ENCODE measurements at regions of chr20 and their contacts with region 1.

Region 1: DNA sequence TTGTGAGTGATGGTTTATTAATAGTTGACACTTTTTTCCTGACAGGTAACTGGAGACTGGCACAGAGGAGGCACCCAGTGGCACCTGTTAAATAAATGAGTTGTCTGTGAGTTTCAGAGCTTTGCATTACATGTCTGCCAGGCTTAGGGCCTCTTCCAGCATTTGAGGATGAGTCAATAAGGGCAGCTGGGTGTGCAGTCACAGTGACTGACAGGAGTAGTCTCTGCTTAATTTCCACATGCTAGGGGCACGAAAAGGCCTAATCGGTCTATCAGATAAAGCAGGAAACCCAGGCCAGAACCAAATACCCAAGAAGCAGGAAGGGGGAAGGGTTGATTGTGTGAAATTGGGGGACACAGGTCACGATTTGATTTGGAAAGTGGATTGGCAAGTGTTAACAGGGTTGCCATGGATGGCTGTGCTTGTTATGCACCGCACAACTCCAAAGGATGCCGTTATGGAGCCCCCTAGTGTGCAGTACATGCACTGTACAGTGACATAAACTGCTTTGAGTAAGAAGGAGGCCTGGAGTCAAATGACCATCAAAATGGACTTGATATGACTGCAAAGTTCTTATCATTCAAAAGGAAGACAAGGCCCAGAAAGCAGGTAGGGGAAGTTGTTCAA is 111.9 kb upstream of the GGTLC1 start:
- DNase-seq: peak; percentile 69
- H3K4me3 Mint-ChIP-seq: no peak overlapping the region
- H3K27ac Mint-ChIP-seq: no peak overlapping the region
- H3K4me1 Mint-ChIP-seq: peaks cover 20% of the 10 kb centered on the region
- H3K27me3 Mint-ChIP-seq: peaks cover 11% of the 10 kb centered on the region

Region 2: GRCh38 chr20:23937303-23938117 is 163.0 kb before region 1 on chr20:
- CTCF ChIA-PET with region 1: interaction called, 23 read pairs
- POLR2A ChIA-PET with region 1: no interaction called
- intact Hi-C with region 1: loop called (anchors 1 kb)
- DNase-seq: peak; percentile 70
- H3K4me3 Mint-ChIP-seq: no peak overlapping the region
- H3K27ac Mint-ChIP-seq: no peak overlapping the region
- H3K4me1 Mint-ChIP-seq: no peaks in the 10 kb centered on the region
- H3K27me3 Mint-ChIP-seq: no peaks in the 10 kb centered on the region

Region 3: GRCh38 chr20:24027229-24027628 is 73.3 kb before region 1 on chr20:
- CTCF ChIA-PET with region 1: interaction called, 4 read pairs
- POLR2A ChIA-PET with region 1: no interaction called
- intact Hi-C with region 1: loop called (anchors 2 kb)
- DNase-seq: peak; percentile 88
- H3K4me3 Mint-ChIP-seq: peak overlapping the region; percentile 48
- H3K27ac Mint-ChIP-seq: peak overlapping the region; percentile 88
- H3K4me1 Mint-ChIP-seq: peaks cover 32% of the 10 kb centered on the region
- H3K27me3 Mint-ChIP-seq: no peaks in the 10 kb centered on the region

Region 4: DNA sequence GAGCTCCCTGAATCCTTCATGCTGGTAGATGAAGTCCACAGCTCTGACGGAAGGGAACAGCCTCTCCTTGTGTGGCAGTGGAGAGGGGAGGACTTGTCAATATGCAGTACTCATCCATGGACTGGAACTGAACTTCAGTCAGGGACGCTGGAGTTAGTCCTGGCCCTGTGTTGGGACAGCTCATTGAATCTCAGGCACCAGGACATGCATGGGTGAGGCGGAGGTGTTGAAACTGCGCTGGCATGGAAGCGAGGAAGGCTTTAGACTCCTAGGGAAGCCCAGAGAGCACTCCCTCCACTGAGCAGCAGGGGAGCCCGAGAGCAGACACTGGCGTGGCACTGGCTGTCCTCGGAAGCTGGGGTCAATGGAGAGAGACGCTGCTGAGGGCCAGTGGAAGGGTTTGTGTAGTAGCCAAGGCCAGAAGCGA is 49.4 kb after region 1 on chr20:
- CTCF ChIA-PET with region 1: no interaction called
- POLR2A ChIA-PET with region 1: no interaction called
- intact Hi-C with region 1: no loop called
- DNase-seq: no peak
- H3K4me3 Mint-ChIP-seq: no peak overlapping the region
- H3K27ac Mint-ChIP-seq: no peak overlapping the region
- H3K4me1 Mint-ChIP-seq: no peaks in the 10 kb centered on the region
- H3K27me3 Mint-ChIP-seq: peaks cover 19% of the 10 kb centered on the region

Region 5: DNA sequence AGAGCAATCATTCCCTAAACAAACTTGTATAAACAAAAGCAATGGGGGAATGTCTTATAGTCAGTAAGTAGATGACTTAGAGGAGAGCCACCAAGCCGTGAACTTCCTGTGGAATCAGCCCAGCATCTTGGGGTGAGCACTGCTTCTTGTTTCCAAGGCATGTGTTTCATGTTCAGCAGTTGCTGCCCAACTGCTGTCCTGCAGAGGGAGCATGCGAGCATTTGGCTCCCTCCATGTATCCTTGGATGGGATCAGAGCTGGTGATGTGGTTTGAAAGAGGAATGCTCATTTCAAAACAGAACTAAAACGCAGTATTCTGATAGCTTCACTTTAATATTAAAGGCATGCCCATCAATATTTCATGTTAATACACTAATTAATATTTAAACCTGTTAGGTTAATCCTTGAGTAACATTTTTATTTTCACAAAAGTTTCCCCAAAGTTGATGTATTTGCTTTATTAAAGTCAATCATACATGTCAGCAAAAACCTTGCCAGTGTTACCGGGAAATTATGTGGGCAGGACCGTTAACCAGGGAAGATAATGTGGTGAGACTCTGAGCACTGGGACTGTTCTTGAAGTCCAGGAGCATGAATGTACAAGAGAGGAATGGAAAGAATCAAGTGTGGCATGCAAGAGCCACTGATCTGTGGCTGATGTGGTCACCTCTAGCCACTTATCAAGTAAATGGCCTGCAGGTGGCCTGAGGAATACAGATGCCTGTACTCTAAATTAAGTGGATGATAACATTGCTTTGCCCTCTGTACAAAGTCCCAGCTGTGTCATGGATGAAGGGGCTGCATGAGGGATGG is 60.3 kb after region 1 on chr20:
- CTCF ChIA-PET with region 1: interaction called, 6 read pairs
- POLR2A ChIA-PET with region 1: no interaction called
- intact Hi-C with region 1: loop called (anchors 2 kb)
- DNase-seq: peak; percentile 21
- H3K4me3 Mint-ChIP-seq: no peak overlapping the region
- H3K27ac Mint-ChIP-seq: no peak overlapping the region
- H3K4me1 Mint-ChIP-seq: no peaks in the 10 kb centered on the region
- H3K27me3 Mint-ChIP-seq: no peaks in the 10 kb centered on the region

Measured in activated CD4-positive, alpha-beta memory T cell treated with anti-CD3 and anti-CD28 coated beads for 36 hours (primary cell).